GM10248 (cell line): ENCODE measurements at regions of chr4 and their contacts with region 1.

Region 1: GRCh38 chr4:1167247-1167949 is 5.0 kb downstream of the SPON2 start:
- DNase-seq: peak; percentile 89
- CTCF ChIP-seq: peak; percentile 87

Region 2: GRCh38 chr4:1151541-1151940 is 15.9 kb before region 1 on chr4:
- CTCF ChIA-PET with region 1: interaction called, 11 read pairs
- POLR2A ChIA-PET with region 1: no interaction called
- DNase-seq: no peak
- CTCF ChIP-seq: no peak

Region 3: DNA sequence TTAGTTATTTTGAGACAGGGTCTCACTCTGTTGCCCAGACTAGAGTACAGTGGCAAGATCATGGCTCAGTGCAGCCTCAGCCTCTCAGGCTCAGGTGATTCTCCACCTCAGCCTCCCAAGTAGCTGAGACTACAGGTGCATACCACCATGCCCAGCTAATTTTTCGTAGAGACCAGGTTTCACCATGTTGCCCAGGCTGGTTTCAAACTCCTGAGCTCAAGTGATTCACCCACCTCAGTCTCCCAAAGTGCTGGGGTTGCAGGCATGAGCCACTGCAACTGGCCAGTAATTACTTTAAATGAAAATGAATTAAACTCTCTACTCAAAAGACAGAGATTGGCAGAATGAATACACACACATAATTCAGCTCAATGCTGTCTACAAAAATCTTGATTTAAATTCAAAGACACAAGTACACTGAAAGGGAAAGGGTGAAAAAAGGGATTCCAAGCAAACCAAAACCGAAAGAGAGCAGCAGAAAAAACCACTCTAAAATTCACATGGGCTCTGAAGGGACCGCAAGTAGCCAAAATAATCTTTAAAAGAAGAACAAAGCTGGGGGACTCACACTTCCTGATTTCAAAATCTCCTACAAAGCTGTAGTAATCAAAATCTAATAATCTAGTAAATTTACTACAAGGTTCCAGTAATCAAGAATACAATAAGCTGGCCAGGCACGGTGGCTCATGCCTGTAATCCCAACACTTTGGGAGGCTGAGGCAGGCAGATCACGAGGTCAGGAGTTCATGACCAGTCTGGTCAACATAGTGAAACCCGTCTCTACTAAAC is 16.8 kb after region 1 on chr4:
- CTCF ChIA-PET with region 1: interaction called, 17 read pairs
- POLR2A ChIA-PET with region 1: no interaction called
- DNase-seq: peak; percentile 60
- CTCF ChIP-seq: no peak